ENCODE measurements at regions of chr18 and their contacts with region 1.

Region 1: DNA sequence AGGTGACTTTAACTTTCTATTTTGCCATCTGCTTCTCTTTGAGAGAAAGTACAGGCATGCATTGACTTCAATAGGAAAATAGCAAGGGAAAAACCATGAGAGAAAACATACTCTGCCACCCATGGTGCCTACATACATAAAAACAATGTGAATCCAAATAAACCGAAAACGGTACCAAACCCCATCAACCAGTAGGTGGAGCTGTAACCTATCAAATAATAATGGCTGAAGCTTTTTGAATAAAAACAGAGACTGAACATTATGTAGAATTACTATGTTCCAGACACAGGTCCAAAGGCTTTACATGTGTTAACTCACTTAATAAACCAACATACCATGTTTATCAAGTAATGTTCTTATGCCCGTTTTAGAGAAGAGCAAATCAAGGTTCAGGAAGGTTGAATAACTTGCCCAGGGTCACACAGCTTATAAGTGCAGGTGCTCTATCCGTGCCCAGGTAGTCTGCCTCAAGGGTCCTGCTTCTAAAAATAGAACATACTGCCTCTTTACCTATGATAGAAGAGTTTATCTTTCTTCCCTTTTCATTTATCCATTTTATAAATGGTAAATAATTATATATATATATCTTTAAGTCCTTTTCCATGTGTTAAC is 293.9 kb upstream of the SYT4 start:
- DNase-seq: peak in 1 of 2 donors; percentile 12
- ATAC-seq: no peak
- H3K4me3 ChIP-seq: no peak overlapping the region
- H3K27ac ChIP-seq: no peak overlapping the region
- H3K4me1 ChIP-seq: no peaks in the 10 kb centered on the region
- H3K27me3 ChIP-seq: peaks cover 0 to 7% (median 0%) of the 10 kb centered on the region in 7 donors
- CTCF ChIP-seq: peak; percentile 32 to 80 (median 72)

Region 2: GRCh38 chr18:43515481-43515880 is 55.7 kb before region 1 on chr18:
- intact Hi-C with region 1: loop called in 1 of 10 experiments (anchors 5 kb)
- DNase-seq: no peak
- ATAC-seq: no peak
- H3K4me3 ChIP-seq: no peak overlapping the region
- H3K27ac ChIP-seq: no peak overlapping the region
- H3K4me1 ChIP-seq: no peaks in the 10 kb centered on the region
- H3K27me3 ChIP-seq: no peaks in the 10 kb centered on the region
- CTCF ChIP-seq: no peak

Region 3: GRCh38 chr18:43587538-43588153 is 16.5 kb after region 1 on chr18:
- intact Hi-C with region 1: loop called in 2 of 10 experiments (anchors 1 to 2 kb)
- DNase-seq: no peak
- ATAC-seq: peak in 5 of 8 donors; percentile 42 to 72 (median 52)
- H3K4me3 ChIP-seq: no peak overlapping the region
- H3K27ac ChIP-seq: no peak overlapping the region
- H3K4me1 ChIP-seq: peaks cover 0 to 4% (median 0%) of the 10 kb centered on the region in 9 donors
- H3K27me3 ChIP-seq: no peaks in the 10 kb centered on the region
- CTCF ChIP-seq: peak; percentile 49 to 83 (median 73)

Measured in heart right ventricle (tissue), 16 donors.